ENCODE measurements at regions of chr20 and their contacts with region 1.

Region 1: DNA sequence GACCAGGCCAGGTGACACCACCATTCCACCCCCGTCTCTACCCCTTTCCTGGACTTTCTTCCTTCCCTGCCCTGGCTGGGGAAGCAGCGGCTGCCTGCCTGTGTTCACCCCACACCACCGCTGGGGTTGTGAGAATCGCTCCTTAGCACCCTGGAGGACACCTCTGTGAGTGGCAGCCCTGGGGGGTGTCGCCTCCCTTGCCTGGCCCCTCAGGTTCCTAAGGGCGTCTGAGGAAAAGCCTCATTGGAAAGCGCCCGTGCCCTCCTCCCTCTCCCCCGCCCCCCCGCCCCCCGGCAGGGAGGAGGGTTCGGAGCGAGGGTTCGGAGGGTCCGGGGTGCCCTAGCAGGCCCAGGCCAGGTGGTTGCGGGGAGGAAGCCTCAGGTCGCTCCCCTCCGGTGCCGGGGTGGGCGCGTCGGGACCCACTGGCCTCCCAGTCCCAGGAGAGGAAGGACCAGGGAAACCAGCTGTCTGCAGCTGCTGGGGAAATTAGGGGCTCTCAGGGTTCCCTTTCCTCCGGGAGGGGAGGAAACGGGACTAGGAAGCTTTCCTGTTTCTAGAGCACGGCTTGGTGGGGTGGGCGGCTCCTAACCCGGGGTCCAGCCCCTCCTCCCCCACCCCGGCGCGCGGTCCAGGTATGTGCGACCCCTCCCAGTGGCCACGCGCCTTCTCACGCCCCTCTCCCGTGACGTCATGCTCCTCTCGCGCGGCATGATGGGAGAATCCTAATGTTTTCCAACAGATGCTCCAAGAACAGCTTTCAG is at the start of gene PHACTR3:
- DNase-seq: no peak
- ATAC-seq: no peak
- total RNA-seq, gene PHACTR3: 6.8 TPM

Region 2: DNA sequence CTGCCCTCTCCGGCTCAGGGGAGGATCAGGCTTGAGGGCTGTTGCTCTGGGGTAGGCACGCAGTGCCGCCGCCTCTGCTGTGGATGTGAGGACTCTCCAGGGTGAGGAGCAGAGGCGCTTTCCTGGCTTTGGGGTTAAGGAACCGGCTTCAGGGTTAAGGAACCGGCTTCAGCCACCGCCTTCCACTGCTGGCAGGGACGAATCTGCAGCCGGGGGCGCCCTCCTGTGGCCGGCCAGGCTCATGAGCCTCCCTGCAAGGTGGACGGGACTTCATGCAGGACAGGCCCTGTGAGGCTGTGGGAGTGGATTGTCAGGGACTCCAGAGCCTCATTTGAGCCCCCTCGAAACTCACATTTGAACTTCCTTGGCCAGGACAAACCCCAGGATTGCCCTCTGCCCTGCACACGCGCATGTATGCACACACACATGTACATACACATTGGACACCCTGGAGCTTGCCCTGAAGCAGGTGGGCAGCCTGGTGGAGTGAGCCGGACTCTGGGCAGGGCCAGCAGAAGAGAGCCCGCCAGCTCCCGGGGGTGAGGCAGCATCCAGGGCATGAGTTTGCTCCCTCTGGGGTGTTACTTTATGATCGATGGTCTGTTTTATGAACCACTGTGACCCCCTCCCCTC is 147.2 kb after region 1 on chr20:
- intact Hi-C with region 1: loop called (anchors 5 kb)
- DNase-seq: peak; percentile 88
- ATAC-seq: peak; percentile 73

Measured in left ventricle myocardium superior (tissue), 1 donor.